Right cardiac atrium (tissue), 5 donors: ENCODE measurements at regions of chr6 and their contacts with region 1.

Region 1: GRCh38 chr6:134041093-134041492 is 11.3 kb downstream of the SLC2A12 start:
- DNase-seq: no peak
- ATAC-seq: no peak
- H3K4me3 ChIP-seq: no peak overlapping the region
- H3K27ac ChIP-seq: no peak overlapping the region
- H3K4me1 ChIP-seq: peaks cover 1% of the 10 kb centered on the region
- H3K27me3 ChIP-seq: no peaks in the 10 kb centered on the region

Region 2: GRCh38 chr6:133418108-133418507 is 623.0 kb before region 1 on chr6:
- intact Hi-C with region 1: no loop called
- DNase-seq: no peak
- ATAC-seq: no peak
- H3K4me3 ChIP-seq: no peak overlapping the region
- H3K27ac ChIP-seq: no peak overlapping the region
- H3K4me1 ChIP-seq: no peaks in the 10 kb centered on the region
- H3K27me3 ChIP-seq: no peaks in the 10 kb centered on the region

Region 3: GRCh38 chr6:133983099-133983939 is 57.8 kb before region 1 on chr6:
- intact Hi-C with region 1: loop called in 1 of 4 experiments (anchors 10 kb)
- DNase-seq: peak in 1 of 3 donors; percentile 58
- ATAC-seq: peak; percentile 23 to 36
- H3K4me3 ChIP-seq: no peak overlapping the region
- H3K27ac ChIP-seq: no peak overlapping the region
- H3K4me1 ChIP-seq: peaks cover 3% of the 10 kb centered on the region
- H3K27me3 ChIP-seq: no peaks in the 10 kb centered on the region

Region 4: GRCh38 chr6:134117370-134117807 is 76.3 kb after region 1 on chr6:
- intact Hi-C with region 1: no loop called
- DNase-seq: no peak
- ATAC-seq: no peak
- H3K4me3 ChIP-seq: no peak overlapping the region
- H3K27ac ChIP-seq: no peak overlapping the region
- H3K4me1 ChIP-seq: no peaks in the 10 kb centered on the region
- H3K27me3 ChIP-seq: no peaks in the 10 kb centered on the region

Region 5: GRCh38 chr6:134174672-134175198 is 133.6 kb after region 1 on chr6:
- intact Hi-C with region 1: no loop called
- DNase-seq: peak; percentile 95 to 98 (median 98)
- ATAC-seq: peak; percentile 91 to 95
- H3K4me3 ChIP-seq: peak overlapping the region; percentile 86
- H3K27ac ChIP-seq: peak overlapping the region; percentile 94
- H3K4me1 ChIP-seq: peaks cover 3% of the 10 kb centered on the region
- H3K27me3 ChIP-seq: no peaks in the 10 kb centered on the region

Region 6: GRCh38 chr6:134331256-134331655 is 290.2 kb after region 1 on chr6:
- intact Hi-C with region 1: no loop called
- DNase-seq: no peak
- ATAC-seq: no peak
- H3K4me3 ChIP-seq: no peak overlapping the region
- H3K27ac ChIP-seq: no peak overlapping the region
- H3K4me1 ChIP-seq: no peaks in the 10 kb centered on the region
- H3K27me3 ChIP-seq: no peaks in the 10 kb centered on the region